ENCODE measurements at regions of chr18 and their contacts with region 1.

Region 1: DNA sequence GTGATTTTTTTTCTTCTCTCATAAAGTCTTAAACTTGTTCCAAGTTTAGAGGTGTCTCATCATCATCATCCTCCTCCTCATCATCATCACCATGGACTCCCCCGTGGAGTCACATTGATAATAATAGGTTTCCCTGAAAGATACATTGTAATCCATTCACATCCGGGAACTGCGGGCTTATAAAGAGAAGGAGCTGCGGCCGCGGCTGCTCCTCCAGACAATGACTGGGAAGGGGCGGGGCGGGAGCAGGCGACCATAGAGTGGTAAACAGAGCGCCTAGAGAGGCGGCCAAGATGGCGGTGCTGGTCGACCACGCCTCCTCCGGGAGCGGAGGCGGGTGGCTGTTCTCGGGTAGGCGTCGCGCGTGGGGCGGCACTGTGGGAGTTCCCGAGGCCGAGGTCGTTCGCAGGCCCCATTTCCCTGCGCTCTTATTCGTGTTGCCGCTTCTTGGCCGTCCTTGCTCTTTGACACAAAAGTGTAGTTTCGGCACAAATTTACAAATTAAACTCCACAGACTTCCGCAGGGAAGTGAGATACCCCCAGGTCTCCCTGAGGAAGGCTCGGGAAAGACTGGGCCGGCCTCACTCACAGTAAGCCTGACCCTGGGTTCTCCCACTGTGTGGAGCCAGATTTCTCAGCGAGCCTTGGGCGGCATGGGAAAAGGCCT is 1.8 kb upstream of the TCF4 start:
- DNase-seq: peak; percentile 85 to 98
- H3K4me3 ChIP-seq: peak overlapping the region; percentile 69 to 96
- H3K27ac ChIP-seq: peak overlapping the region; percentile 85 to 89
- H3K4me1 ChIP-seq: peaks cover 3 to 5% of the 10 kb centered on the region in 2 donors
- H3K27me3 ChIP-seq: no peaks in the 10 kb centered on the region
- CTCF ChIP-seq: no peak

Region 2: DNA sequence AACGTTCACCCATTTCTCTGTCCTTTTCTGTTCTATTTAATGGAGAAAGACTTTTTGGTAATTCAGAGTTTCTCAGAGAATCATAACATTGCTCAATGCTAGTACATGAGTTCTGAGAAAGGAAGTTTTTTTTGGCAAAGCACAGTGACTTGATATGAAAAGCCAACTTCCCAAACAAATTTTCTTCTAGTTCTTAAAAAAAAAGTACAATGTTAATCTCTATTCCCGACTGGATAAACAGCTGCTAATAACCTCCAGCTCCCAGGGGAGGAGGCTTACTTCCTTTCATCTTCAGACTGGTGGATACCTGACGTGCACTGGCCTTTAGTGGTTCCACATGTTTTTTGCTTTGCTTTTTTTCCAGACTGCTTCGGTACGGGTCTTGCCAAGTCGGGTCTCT is 345.9 kb before region 1 on chr18:
- intact Hi-C with region 1: loop called (anchors 5 kb)
- DNase-seq: peak in 1 of 2 donors; percentile 74
- H3K4me3 ChIP-seq: peak overlapping the region; percentile 42 to 45
- H3K27ac ChIP-seq: peak overlapping the region; percentile 80 to 87
- H3K4me1 ChIP-seq: peaks cover 0 to 33% of the 10 kb centered on the region in 2 donors
- H3K27me3 ChIP-seq: no peaks in the 10 kb centered on the region
- CTCF ChIP-seq: no peak

Region 3: GRCh38 chr18:55322178-55322735 is 267.5 kb before region 1 on chr18:
- intact Hi-C with region 1: loop called (anchors 5 kb)
- DNase-seq: peak; percentile 59 to 89
- H3K4me3 ChIP-seq: peak overlapping the region; percentile 67 to 69
- H3K27ac ChIP-seq: peak overlapping the region; percentile 78 to 92
- H3K4me1 ChIP-seq: peaks cover 0 to 29% of the 10 kb centered on the region in 2 donors
- H3K27me3 ChIP-seq: no peaks in the 10 kb centered on the region
- CTCF ChIP-seq: peak in 1 of 3 experiments; percentile 8

Region 4: DNA sequence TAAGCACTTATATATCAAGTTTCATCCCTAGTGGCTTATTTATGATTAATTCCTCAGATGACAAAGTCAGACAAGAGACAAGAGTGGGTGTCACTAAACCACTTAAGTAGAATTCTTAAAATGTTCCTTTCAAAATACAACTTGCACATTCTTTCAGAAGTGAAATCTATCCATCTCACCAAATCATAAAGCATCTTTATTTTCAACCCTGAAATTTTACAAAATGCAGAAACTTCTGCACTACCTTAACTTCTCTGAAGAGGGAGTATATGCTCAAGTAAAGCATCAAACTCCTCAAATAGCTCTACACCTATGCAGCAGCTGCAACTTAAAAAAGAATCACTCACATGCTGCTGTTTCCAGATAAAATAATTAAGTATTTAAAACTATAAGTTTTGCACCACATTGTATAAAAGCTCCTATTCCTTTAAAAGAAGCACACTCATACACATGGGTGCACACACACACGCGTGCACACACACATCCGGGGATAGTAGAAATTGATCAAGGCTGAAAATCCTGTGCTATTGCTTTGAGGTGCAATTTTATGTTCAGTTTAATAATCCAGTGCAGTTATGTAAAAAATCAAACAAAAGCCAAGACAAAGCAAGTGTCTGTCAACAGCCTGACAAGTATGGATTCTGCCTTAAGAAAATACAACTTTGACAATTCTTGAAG is 246.2 kb before region 1 on chr18:
- intact Hi-C with region 1: loop called (anchors 5 kb)
- DNase-seq: no peak
- H3K4me3 ChIP-seq: no peak overlapping the region
- H3K27ac ChIP-seq: no peak overlapping the region
- H3K4me1 ChIP-seq: peaks cover 0 to 7% of the 10 kb centered on the region in 2 donors
- H3K27me3 ChIP-seq: no peaks in the 10 kb centered on the region
- CTCF ChIP-seq: peak; percentile 32 to 69 (median 67)

Region 5: DNA sequence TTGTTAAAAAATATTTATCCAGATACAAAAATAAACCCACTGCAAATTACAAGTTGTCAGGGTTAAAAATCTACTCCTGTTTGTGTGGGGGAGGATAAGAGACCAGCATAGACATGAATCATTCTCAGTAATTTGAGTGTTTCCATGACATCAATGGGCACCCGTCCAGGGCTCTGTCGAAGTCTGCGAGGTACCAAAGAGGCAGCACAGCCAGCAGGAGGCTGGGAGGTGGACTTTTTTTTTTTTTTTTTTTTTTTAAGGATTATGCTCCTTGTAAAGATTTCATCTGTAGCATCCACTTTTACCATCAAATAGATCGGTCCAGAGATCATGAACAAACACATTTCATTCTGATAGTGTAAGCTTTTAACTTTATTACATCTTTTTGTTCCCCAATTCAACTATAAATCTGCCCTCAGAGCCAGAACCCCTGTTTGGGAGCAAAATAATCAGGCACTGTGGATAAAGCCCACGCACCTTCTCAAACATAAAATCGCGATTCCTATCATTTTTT is 183.8 kb before region 1 on chr18:
- intact Hi-C with region 1: loop called (anchors 2 kb)
- DNase-seq: peak; percentile 57 to 95
- H3K4me3 ChIP-seq: peak overlapping the region in 1 of 2 donors; percentile 29
- H3K27ac ChIP-seq: peak overlapping the region; percentile 49 to 68
- H3K4me1 ChIP-seq: peaks cover 0 to 14% of the 10 kb centered on the region in 2 donors
- H3K27me3 ChIP-seq: no peaks in the 10 kb centered on the region
- CTCF ChIP-seq: no peak

Region 6: GRCh38 chr18:55477499-55477859 is 112.3 kb before region 1 on chr18:
- intact Hi-C with region 1: loop called (anchors 5 kb)
- DNase-seq: peak in 1 of 2 donors; percentile 68
- H3K4me3 ChIP-seq: peak overlapping the region; percentile 51 to 75
- H3K27ac ChIP-seq: peak overlapping the region; percentile 81 to 85
- H3K4me1 ChIP-seq: peaks cover 0 to 6% of the 10 kb centered on the region in 2 donors
- H3K27me3 ChIP-seq: no peaks in the 10 kb centered on the region
- CTCF ChIP-seq: peak in 1 of 3 experiments; percentile 13

Region 7: GRCh38 chr18:55856229-55856628 is 266.5 kb after region 1 on chr18:
- intact Hi-C with region 1: no loop called
- DNase-seq: no peak
- H3K4me3 ChIP-seq: no peak overlapping the region
- H3K27ac ChIP-seq: no peak overlapping the region
- H3K4me1 ChIP-seq: no peaks in the 10 kb centered on the region
- H3K27me3 ChIP-seq: no peaks in the 10 kb centered on the region
- CTCF ChIP-seq: no peak

Region 8: GRCh38 chr18:56650944-56651770 is 1061.4 kb after region 1 on chr18 and contains the start of gene WDR7:
- intact Hi-C with region 1: loop called (anchors 5 kb)
- DNase-seq: peak; percentile 96 to 99
- H3K4me3 ChIP-seq: peak within 1 kb of the TSS; percentile 80 to 94
- H3K27ac ChIP-seq: peak within 1 kb of the TSS; percentile 87
- H3K4me1 ChIP-seq: peaks cover 7 to 13% of the 10 kb centered on the region in 2 donors
- H3K27me3 ChIP-seq: no peaks in the 10 kb centered on the region
- CTCF ChIP-seq: no peak
- total RNA-seq, gene WDR7: 13.5 TPM

Measured in ascending aorta (tissue), 2 donors.